ENCODE measurements at regions of chr1 and their contacts with region 1.

Region 1: GRCh38 chr1:67723620-67724019 is 38.6 kb downstream of the GADD45A start:
- DNase-seq: no peak
- H3K4me3 ChIP-seq: no peak overlapping the region
- H3K27ac ChIP-seq: no peak overlapping the region
- H3K4me1 ChIP-seq: no peaks in the 10 kb centered on the region
- H3K27me3 ChIP-seq: no peaks in the 10 kb centered on the region
- CTCF ChIP-seq: no peak

Region 2: DNA sequence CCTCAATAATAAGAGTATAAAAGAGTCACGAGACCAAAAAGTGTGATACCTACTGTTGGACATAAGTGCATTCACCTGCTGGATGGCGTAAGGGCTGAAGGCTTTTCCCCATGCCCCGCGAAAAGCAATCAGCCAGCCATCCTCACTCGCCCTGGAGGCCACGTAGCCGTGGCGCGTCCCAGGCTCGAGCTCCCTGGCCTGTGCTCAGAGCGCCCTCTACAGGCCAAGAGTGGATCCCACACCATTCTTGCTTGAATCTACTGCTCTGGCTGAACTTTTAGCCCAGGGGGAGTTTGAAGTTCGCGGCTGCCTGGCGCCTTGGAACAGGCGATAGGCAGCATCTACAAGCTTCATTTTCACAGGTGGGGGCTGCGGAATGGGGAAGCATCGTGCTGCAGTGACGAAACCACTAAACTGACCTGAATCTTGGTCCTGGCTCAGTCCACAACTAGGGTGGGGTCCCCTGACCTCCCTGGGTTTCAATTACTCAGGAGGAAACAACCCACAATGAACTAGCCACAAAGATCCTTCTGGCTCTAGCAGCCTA is 223.1 kb before region 1 on chr1:
- intact Hi-C with region 1: no loop called
- DNase-seq: peak; percentile 89
- H3K4me3 ChIP-seq: no peak overlapping the region
- H3K27ac ChIP-seq: no peak overlapping the region
- H3K4me1 ChIP-seq: no peaks in the 10 kb centered on the region
- H3K27me3 ChIP-seq: no peaks in the 10 kb centered on the region
- CTCF ChIP-seq: peak; percentile 96

Region 3: GRCh38 chr1:67559222-67559700 is 164.4 kb before region 1 on chr1:
- intact Hi-C with region 1: no loop called
- DNase-seq: no peak
- H3K4me3 ChIP-seq: no peak overlapping the region
- H3K27ac ChIP-seq: no peak overlapping the region
- H3K4me1 ChIP-seq: no peaks in the 10 kb centered on the region
- H3K27me3 ChIP-seq: no peaks in the 10 kb centered on the region
- CTCF ChIP-seq: no peak

Region 4: DNA sequence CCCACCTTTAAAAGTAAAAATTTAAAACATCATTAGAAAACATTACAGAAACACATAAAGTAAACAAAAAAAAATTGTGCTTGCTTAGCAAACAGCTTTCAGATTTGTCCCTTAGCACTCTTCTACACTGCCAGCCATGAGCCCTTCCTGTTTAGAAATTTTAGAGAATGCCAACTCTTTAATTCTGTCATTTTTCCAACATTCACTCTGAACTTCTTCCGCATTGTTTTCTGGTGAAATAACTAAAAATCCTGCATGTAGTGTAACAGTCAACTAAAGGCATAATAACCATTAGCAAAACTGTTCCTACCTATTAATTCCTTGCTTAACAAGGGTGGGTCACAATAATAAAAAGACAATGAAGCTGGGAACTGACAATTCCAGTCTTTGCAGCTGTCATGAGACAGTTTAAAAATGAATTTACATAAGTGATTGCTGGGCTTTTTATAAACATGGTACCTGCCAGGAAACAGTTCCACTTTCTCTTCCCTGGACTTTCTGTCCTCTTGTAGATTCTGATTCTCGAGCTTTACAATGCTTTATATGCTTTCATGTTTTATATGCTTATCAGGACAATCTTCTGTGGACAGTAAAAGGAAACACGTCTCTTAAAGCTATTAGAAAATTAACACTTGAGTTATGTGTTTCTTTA is 90.6 kb after region 1 on chr1:
- intact Hi-C with region 1: no loop called
- DNase-seq: no peak
- H3K4me3 ChIP-seq: no peak overlapping the region
- H3K27ac ChIP-seq: peak overlapping the region; percentile 87
- H3K4me1 ChIP-seq: peaks cover 7% of the 10 kb centered on the region
- H3K27me3 ChIP-seq: no peaks in the 10 kb centered on the region
- CTCF ChIP-seq: no peak

Region 5: DNA sequence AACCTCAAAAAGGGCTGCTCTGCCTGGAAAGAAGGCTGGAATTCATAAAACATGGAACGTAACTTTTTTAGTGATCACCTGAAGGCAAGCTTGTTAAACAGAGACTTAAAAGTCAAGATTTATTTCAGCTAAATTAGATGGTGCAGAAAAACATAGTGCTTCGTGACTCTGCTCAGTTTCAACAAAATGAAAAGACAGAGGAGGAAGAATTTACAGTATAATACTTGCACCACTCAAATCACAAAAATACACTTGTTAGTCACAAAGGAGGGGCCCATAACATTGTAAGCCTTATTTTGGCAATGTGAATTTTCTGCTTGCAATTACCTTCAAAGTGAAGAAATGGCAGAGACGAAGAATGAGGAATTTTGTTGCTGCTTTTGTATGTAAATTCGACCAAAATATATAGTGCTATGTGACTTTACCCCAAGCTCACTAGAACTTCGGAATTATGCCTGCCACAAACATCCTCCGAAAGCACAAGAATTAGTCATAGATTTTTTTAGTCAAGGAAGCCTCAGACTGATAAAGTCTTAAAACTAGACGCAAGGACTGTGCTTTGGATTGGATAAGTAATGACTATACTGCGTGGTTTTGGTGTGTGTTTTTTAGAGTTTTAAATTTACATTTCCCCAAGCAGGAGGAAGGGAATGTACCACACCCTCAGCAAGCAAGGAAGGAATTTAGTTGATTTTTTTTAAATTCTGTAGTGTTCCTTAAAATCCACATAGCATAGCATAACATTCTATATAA is 498.2 kb after region 1 on chr1:
- intact Hi-C with region 1: loop called (anchors 5 kb)
- DNase-seq: no peak
- H3K4me3 ChIP-seq: no peak overlapping the region
- H3K27ac ChIP-seq: no peak overlapping the region
- H3K4me1 ChIP-seq: no peaks in the 10 kb centered on the region
- H3K27me3 ChIP-seq: no peaks in the 10 kb centered on the region
- CTCF ChIP-seq: no peak